ENCODE measurements at regions of chr7 and their contacts with region 1.

Region 1: GRCh38 chr7:113698556-113699220 is 220.1 kb downstream of the PPP1R3A start:
- DNase-seq: peak; percentile 49
- H3K4me3 Mint-ChIP-seq: no peak overlapping the region
- H3K27ac Mint-ChIP-seq: no peak overlapping the region
- H3K4me1 Mint-ChIP-seq: no peaks in the 10 kb centered on the region
- H3K27me3 Mint-ChIP-seq: no peaks in the 10 kb centered on the region
- CTCF ChIP-seq: peak; percentile 75

Region 2: GRCh38 chr7:113015032-113015645 is 683.5 kb before region 1 on chr7:
- CTCF ChIA-PET with region 1: interaction called, 9 read pairs
- POLR2A ChIA-PET with region 1: no interaction called
- intact Hi-C with region 1: loop called (anchors 2 kb)
- DNase-seq: peak; percentile 53
- H3K4me3 Mint-ChIP-seq: no peak overlapping the region
- H3K27ac Mint-ChIP-seq: peak overlapping the region; percentile 70
- H3K4me1 Mint-ChIP-seq: peaks cover 15% of the 10 kb centered on the region
- H3K27me3 Mint-ChIP-seq: no peaks in the 10 kb centered on the region
- CTCF ChIP-seq: no peak

Region 3: GRCh38 chr7:113289140-113289740 is 409.4 kb before region 1 on chr7:
- CTCF ChIA-PET with region 1: no interaction called
- POLR2A ChIA-PET with region 1: no interaction called
- intact Hi-C with region 1: loop called (anchors 2 kb)
- DNase-seq: peak; percentile 64
- H3K4me3 Mint-ChIP-seq: no peak overlapping the region
- H3K27ac Mint-ChIP-seq: no peak overlapping the region
- H3K4me1 Mint-ChIP-seq: peaks cover 5% of the 10 kb centered on the region
- H3K27me3 Mint-ChIP-seq: no peaks in the 10 kb centered on the region
- CTCF ChIP-seq: peak; percentile 68

Region 4: DNA sequence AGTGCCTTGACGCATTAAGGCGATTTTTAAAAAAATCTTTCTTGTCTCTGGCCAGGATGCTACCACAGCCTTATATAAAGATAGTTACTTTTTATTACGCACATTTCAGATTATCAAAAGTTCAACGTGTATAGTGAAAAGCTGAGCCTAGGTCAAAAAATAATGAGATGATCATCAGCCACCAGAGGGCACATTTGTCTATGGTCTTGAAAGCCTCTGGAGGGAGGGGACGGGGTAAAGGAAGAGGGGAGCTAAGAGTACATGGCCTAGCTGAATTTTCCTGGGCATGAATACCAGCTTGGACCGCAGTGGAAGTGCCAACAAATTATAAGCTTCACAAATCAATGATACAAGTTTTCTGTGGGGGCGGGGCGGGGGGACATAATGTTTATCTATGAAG is 294.4 kb before region 1 on chr7:
- CTCF ChIA-PET with region 1: interaction called, 13 read pairs
- POLR2A ChIA-PET with region 1: no interaction called
- intact Hi-C with region 1: loop called (anchors 1 kb)
- DNase-seq: peak; percentile 40
- H3K4me3 Mint-ChIP-seq: no peak overlapping the region
- H3K27ac Mint-ChIP-seq: no peak overlapping the region
- H3K4me1 Mint-ChIP-seq: no peaks in the 10 kb centered on the region
- H3K27me3 Mint-ChIP-seq: no peaks in the 10 kb centered on the region
- CTCF ChIP-seq: peak; percentile 33

Region 5: DNA sequence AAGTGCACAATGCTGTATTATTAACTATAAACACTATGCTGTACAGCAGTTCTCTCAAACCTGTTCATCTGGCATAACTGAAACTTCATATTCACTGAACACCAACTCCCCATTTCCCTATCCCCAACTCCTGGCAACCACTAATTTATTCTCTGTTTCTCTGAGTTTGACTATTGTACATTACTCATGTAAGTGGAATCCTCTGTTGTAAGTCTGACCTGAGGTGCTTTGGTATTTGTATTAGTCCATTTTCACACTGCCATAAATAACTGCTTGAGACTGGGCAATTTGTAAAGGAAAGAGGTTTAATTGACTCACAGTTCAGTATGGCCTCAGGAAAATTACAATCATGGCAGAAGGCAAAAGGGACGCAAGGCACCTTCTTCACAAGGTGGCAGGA is 46.2 kb before region 1 on chr7:
- CTCF ChIA-PET with region 1: no interaction called
- POLR2A ChIA-PET with region 1: no interaction called
- intact Hi-C with region 1: no loop called
- DNase-seq: peak; percentile 50
- H3K4me3 Mint-ChIP-seq: no peak overlapping the region
- H3K27ac Mint-ChIP-seq: peak overlapping the region; percentile 92
- H3K4me1 Mint-ChIP-seq: peaks cover 16% of the 10 kb centered on the region
- H3K27me3 Mint-ChIP-seq: no peaks in the 10 kb centered on the region
- CTCF ChIP-seq: no peak

Region 6: GRCh38 chr7:113677811-113678210 is 20.9 kb before region 1 on chr7:
- CTCF ChIA-PET with region 1: no interaction called
- POLR2A ChIA-PET with region 1: no interaction called
- intact Hi-C with region 1: no loop called
- DNase-seq: no peak
- H3K4me3 Mint-ChIP-seq: no peak overlapping the region
- H3K27ac Mint-ChIP-seq: no peak overlapping the region
- H3K4me1 Mint-ChIP-seq: peaks cover 6% of the 10 kb centered on the region
- H3K27me3 Mint-ChIP-seq: no peaks in the 10 kb centered on the region
- CTCF ChIP-seq: no peak

Measured in MCF 10A (cell line).